ENCODE measurements at regions of chr17 and their contacts with region 1.

Region 1: DNA sequence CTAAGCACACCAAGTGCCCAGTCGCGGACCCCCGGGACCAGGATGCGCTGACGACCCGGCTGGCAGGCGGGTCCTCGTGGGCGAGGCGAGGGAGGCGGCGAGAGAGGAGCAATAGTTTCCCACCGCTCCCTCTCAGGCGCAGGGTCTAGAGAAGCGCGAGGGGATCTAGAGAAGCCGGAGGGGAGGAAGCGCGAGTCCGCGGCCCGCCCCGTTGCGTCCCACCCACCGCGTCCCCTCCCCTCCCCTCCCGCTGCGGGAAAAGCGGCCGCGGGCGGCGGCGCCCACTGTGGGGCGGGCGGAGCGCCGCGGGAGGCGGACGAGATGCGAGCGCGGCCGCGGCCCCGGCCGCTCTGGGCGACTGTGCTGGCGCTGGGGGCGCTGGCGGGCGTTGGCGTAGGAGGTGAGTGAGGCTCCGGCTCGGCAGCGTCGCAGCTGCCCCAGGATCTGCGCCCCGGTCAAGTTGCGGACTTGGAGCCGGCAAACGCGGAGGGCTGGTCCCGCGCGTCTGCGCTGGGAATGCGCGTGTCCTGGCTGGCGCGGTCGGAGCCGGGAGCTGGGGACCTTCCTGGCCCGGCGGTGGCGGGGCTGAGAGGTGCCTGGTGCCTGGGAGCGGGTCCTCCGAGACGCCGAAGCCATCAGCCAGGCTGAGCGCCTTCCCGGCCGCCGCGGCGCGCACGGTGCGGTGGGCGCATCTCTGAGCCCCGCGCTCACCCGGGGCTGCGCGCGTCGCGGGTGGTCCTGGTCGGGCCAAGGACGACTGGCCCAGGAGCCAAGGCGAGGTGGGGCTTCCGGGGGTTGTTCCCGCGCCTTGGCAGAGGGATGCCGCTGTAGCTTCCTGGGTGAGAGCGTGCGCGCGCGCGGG is at the start of gene ITGB3:
- DNase-seq: peak; percentile 37
- ATAC-seq: peak; percentile 96
- H3K4me3 ChIP-seq: peak within 1 kb of the TSS; percentile 55 to 79 (median 65)
- H3K27ac ChIP-seq: peak within 1 kb of the TSS; percentile 19
- H3K4me1 ChIP-seq: peaks cover 30% of the 10 kb centered on the region
- H3K27me3 ChIP-seq: peaks cover 0 to 13% of the 10 kb centered on the region in 2 experiments; a peak in 4 of 5 replicates
- CTCF ChIP-seq: peak; percentile 69
- EP300 ChIP-seq: no peak
- POLR2A ChIP-seq: no peak
- RAD21 ChIP-seq: peak; percentile 70
- total RNA-seq, gene ITGB3: 0.15 and 0.31 TPM in 2 replicates

Region 2: DNA sequence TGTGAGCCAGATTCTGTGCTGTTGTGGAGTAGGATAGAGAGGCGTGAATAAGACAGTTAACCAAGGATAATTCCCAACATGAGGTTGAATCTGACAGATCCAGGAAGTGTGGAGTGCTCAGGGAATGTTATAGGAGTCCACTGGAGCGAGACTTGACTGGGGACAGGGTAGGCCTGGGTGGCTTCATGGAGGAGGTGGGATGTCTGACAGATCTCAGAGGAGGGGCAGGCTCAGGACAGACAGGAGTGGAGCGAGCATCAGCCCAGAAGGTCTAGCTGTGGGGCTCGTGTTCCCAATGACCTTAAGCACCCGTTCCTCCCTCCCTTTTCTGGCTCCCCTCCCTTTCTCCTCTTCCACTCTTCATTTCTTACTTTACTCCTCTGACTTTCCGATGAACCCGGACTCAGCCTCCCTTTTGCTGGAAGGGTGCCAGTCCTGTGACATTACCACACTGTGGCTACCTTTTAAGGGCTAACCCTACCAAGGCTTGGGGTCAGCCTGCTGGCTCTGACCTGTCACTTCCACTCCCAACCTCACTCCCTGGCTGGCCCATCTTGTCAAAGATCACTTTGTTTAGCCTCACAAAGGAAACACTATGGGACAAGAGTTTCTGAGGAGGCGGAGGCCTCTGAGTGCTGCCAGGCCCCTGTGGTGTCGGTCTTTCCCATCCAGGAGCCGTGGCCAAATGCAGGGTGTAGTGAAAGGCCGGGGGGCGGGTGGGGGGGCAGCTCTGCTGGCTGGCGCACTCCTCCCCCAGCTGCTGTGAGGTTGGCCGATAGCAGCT is 41.5 kb after region 1 on chr17:
- CTCF ChIA-PET with region 1: no interaction called
- POLR2A ChIA-PET with region 1: interaction called, 4 read pairs
- in situ Hi-C with region 1: no loop called
- intact Hi-C with region 1: loop called (anchors 2 kb)
- DNase-seq: peak; percentile 79
- ATAC-seq: peak; percentile 63
- H3K4me3 ChIP-seq: peak overlapping the region in 1 of 3 experiments; percentile 24; a peak in 1 of 6 replicates
- H3K27ac ChIP-seq: no peak overlapping the region
- H3K4me1 ChIP-seq: peaks cover 39% of the 10 kb centered on the region
- H3K27me3 ChIP-seq: peaks cover 1 to 20% of the 10 kb centered on the region in 2 experiments; a peak in 3 of 5 replicates
- CTCF ChIP-seq: no peak
- EP300 ChIP-seq: no peak
- POLR2A ChIP-seq: no peak
- RAD21 ChIP-seq: no peak

Measured in HepG2 (cell line).